Right cardiac atrium (tissue), 5 donors: ENCODE measurements at regions of chr2 and their contacts with region 1.

Region 1: GRCh38 chr2:217756375-217757107 is 246.3 kb downstream of the TNS1 start:
- DNase-seq: peak; percentile 80 to 92 (median 92)
- ATAC-seq: peak; percentile 85 to 90
- H3K4me3 ChIP-seq: peak overlapping the region; percentile 16
- H3K27ac ChIP-seq: no peak overlapping the region
- H3K4me1 ChIP-seq: peaks cover 5% of the 10 kb centered on the region
- H3K27me3 ChIP-seq: no peaks in the 10 kb centered on the region

Region 2: DNA sequence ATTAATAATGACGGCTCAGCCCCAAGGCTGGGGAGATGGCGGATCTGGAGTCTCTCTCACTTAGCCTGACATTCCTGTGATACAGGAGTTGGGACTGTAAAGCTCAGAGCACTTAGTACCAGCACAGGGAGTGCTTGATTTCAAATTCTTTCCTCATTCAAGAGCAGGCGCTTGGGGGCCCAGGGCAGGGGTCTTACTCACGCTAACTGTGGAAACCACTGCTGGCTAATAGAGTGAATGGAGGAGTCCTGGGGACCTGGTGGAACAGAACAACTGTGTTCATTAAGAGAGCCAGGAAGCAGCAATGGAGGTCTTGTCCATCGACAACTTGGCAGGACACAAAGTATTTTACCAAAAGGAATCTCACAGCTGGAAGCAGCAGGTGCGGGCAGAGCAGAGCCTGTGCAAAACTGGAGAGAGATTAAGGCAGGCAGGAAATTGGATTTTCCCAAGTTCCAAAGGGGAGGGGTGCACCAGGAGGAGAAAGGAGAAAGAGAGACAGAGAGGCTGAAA is 112.7 kb before region 1 on chr2:
- intact Hi-C with region 1: loop called in 1 of 4 experiments (anchors 10 kb)
- DNase-seq: no peak
- ATAC-seq: peak in 1 of 2 donors; percentile 40
- H3K4me3 ChIP-seq: no peak overlapping the region
- H3K27ac ChIP-seq: peak overlapping the region; percentile 43
- H3K4me1 ChIP-seq: peaks cover 4% of the 10 kb centered on the region
- H3K27me3 ChIP-seq: no peaks in the 10 kb centered on the region

Region 3: GRCh38 chr2:217886720-217887309 is 130.3 kb after region 1 on chr2:
- intact Hi-C with region 1: no loop called
- DNase-seq: peak; percentile 79 to 85 (median 80)
- ATAC-seq: peak; percentile 26 to 28
- H3K4me3 ChIP-seq: no peak overlapping the region
- H3K27ac ChIP-seq: peak overlapping the region; percentile 42
- H3K4me1 ChIP-seq: peaks cover 31% of the 10 kb centered on the region
- H3K27me3 ChIP-seq: no peaks in the 10 kb centered on the region